K562 (cell line): ENCODE measurements at regions of chr5 and their contacts with region 1.

Region 1: DNA sequence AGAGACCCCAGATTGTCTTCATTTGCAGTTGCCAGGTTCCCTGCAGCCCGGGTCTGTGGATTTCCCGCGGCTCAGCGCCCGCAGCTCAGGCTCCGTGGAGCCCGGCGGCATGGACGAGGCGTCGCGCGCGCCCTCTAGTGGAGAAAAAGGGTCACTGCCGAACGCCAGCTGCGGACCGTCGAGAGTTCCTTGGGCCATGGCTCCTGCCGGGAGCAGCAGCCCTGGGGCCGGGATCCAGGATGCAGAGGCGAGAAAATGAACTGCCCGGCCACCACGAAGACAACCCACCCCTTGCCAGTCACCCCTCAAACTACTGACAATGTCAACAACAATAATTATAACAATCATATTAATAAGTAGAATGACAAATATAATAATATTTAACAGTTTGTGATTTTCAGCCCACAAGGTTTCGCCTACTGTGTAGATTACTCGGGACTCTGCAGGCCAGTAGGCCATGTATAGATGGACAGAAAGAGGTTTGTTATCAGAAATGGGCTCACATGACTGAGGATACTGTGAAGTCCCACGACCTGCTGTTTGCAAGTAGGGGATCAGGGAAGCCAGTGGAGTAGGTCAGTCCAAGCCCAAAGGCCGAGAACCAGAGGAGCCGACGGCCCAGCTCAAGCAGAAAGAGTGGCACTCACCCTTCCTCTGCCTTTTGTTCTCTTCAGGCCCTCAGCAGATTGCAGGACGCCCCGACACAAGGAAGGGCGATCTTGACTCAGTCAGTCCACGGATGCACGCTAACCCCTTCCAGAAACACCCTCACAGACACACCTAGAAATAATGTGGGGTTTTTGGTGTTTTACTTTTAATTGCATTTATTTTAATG is 43.1 kb downstream of the BOD1 start:
- DNase-seq: peak; percentile 71 to 83 (median 76)
- ATAC-seq: peak; percentile 99
- H3K4me3 ChIP-seq: no peak overlapping the region
- H3K27ac ChIP-seq: no peak overlapping the region
- H3K4me1 ChIP-seq: peaks cover 0 to 4% of the 10 kb centered on the region in 2 experiments; a peak in 1 of 5 replicates
- H3K27me3 ChIP-seq: peaks cover 33 to 68% of the 10 kb centered on the region in 2 experiments
- CTCF ChIP-seq: peak; percentile 81 to 89 (median 87)
- EP300 ChIP-seq: no peak
- POLR2A ChIP-seq: no peak
- RAD21 ChIP-seq: peak; percentile 70 to 83

Region 2: GRCh38 chr5:173293817-173294672 is 279.3 kb before region 1 on chr5:
- CTCF ChIA-PET with region 1: no interaction called
- POLR2A ChIA-PET with region 1: no interaction called
- in situ Hi-C with region 1: loop called (anchors 5 kb)
- intact Hi-C with region 1: loop called (anchors 5 kb)
- DNase-seq: peak; percentile 67 to 83 (median 72)
- ATAC-seq: peak; percentile 90
- H3K4me3 ChIP-seq: no peak overlapping the region; the same call in 1 of the 2 replicates
- H3K27ac ChIP-seq: no peak overlapping the region
- H3K4me1 ChIP-seq: peaks cover 11 to 19% of the 10 kb centered on the region in 2 experiments
- H3K27me3 ChIP-seq: peaks cover 17 to 34% of the 10 kb centered on the region in 2 experiments
- CTCF ChIP-seq: peak; percentile 91 to 94 (median 92)
- EP300 ChIP-seq: 0 out of 2 replicates have a peak, but pooled peaks have one; percentile 12
- POLR2A ChIP-seq: no peak
- RAD21 ChIP-seq: peak; percentile 97 to 98

Region 3: DNA sequence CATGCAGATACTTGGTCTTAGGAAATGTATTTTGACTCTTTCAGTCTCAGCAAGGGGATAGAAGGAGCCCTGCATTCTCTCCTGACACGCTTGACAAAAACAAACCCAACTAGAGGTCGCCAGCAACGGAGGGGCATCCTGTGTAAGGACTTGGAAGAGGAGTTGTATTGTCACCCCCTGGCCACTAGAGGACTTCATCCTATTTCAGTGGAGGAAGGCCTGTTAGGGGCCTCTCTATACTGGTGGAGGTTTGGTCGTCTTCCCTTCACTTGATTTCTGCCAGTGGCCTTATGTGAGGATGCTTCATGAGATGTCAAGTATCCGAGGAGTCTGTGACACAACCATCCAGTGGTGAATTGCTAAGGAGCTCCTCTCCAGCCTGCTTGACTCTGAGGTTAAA is 122.3 kb before region 1 on chr5:
- CTCF ChIA-PET with region 1: no interaction called
- POLR2A ChIA-PET with region 1: no interaction called
- in situ Hi-C with region 1: no loop called
- intact Hi-C with region 1: loop called (anchors 2 kb)
- DNase-seq: peak; percentile 44 to 65 (median 60)
- ATAC-seq: peak; percentile 84
- H3K4me3 ChIP-seq: no peak overlapping the region
- H3K27ac ChIP-seq: no peak overlapping the region
- H3K4me1 ChIP-seq: peaks cover 3 to 22% of the 10 kb centered on the region in 2 experiments; a peak in 3 of 5 replicates
- H3K27me3 ChIP-seq: peaks cover 0 to 10% of the 10 kb centered on the region in 2 experiments; a peak in 2 of 5 replicates
- CTCF ChIP-seq: peak; percentile 64 to 75 (median 70)
- EP300 ChIP-seq: no peak
- POLR2A ChIP-seq: no peak
- RAD21 ChIP-seq: peak in 1 of 2 experiments; percentile 47; a peak in 2 of 4 replicates

Region 4: DNA sequence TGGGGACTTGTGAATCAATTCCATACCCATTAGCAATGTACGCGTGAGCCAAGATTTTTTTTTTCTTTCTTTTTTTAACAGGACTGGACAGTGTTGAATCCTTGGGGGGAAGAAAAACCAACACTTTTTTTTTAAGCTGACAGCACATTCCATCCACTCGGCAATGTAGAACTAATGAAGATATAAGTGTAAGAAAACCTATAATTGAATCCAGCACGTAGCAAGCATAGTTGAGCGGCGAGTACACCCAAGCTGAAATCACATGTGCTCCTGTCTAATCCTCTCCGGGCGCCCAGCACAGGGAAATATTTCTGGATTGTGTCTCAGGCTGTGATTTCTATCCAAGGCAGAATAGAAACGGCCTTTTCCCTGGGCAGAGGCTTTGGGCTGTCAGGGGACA is 75.1 kb before region 1 on chr5:
- CTCF ChIA-PET with region 1: no interaction called
- POLR2A ChIA-PET with region 1: no interaction called
- in situ Hi-C with region 1: no loop called
- intact Hi-C with region 1: no loop called
- DNase-seq: no peak
- ATAC-seq: no peak
- H3K4me3 ChIP-seq: no peak overlapping the region
- H3K27ac ChIP-seq: no peak overlapping the region
- H3K4me1 ChIP-seq: peaks cover 0 to 3% of the 10 kb centered on the region in 2 experiments; a peak in 1 of 5 replicates
- H3K27me3 ChIP-seq: peaks cover 39 to 64% of the 10 kb centered on the region in 2 experiments
- CTCF ChIP-seq: no peak
- EP300 ChIP-seq: no peak
- POLR2A ChIP-seq: no peak
- RAD21 ChIP-seq: no peak

Region 5: DNA sequence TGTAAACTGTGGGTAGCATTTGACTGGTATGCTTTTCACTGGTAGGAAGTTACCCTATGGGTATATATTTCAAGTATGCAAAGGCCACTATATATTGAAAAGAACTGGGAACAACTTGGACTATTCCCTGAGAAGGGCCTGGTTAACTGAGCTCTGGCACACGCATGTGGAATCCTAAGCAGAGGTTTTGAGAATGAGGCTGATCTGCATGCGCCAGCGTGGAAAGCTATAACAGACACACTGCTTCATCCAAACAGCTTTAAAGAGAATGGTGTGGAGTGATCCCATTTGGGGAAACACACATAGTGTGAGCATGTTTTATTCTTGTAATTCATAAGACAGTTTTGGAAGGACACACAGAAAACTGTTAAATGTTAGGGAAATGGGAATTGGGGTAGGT is 480.6 kb after region 1 on chr5:
- CTCF ChIA-PET with region 1: no interaction called
- POLR2A ChIA-PET with region 1: no interaction called
- in situ Hi-C with region 1: no loop called
- intact Hi-C with region 1: no loop called
- DNase-seq: no peak
- ATAC-seq: no peak
- H3K4me3 ChIP-seq: no peak overlapping the region
- H3K27ac ChIP-seq: no peak overlapping the region
- H3K4me1 ChIP-seq: no peaks in the 10 kb centered on the region
- H3K27me3 ChIP-seq: peaks cover 0 to 6% of the 10 kb centered on the region in 2 experiments; a peak in 2 of 5 replicates
- CTCF ChIP-seq: no peak
- EP300 ChIP-seq: no peak
- POLR2A ChIP-seq: no peak
- RAD21 ChIP-seq: no peak